ENCODE measurements at regions of chr17 and their contacts with region 1.

Region 1: DNA sequence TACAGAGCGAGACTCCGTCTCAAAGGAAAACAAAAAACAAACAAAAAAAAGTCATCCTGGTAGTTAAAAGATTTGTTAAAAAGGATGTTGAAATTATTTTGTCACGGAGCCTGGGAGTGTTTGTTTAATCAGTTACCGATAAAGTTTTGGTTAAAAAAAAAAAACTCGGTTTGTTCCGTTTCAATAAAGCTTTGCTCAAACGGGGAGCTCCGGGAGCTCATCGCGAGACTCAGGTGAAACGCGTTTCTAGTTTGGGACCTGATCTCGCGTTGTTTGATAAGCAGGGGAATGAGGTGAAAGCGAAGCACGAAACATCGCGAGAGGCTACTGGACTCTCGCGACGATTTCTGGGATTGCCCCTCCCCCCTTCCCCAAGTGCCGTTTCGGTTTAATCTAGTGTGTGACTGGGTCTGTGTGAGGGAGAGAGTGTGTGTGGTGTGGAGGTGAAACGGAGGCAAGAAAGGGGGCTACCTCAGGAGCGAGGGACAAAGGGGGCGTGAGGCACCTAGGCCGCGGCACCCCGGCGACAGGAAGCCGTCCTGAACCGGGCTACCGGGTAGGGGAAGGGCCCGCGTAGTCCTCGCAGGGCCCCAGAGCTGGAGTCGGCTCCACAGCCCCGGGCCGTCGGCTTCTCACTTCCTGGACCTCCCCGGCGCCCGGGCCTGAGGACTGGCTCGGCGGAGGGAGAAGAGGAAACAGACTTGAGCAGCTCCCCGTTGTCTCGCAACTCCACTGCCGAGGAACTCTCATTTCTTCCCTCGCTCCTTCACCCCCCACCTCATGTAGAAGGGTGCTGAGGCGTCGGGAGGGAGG is at the start of gene CDK12:
- DNase-seq: peak; percentile 98
- H3K4me3 ChIP-seq: peak within 1 kb of the TSS; percentile 98
- H3K27ac ChIP-seq: peak within 1 kb of the TSS; percentile 99
- H3K27me3 ChIP-seq: no peaks in the 10 kb centered on the region
- CTCF ChIP-seq: no peak
- polyA plus RNA-seq, gene CDK12: 21.7 and 24.3 TPM in 2 replicates

Region 2: DNA sequence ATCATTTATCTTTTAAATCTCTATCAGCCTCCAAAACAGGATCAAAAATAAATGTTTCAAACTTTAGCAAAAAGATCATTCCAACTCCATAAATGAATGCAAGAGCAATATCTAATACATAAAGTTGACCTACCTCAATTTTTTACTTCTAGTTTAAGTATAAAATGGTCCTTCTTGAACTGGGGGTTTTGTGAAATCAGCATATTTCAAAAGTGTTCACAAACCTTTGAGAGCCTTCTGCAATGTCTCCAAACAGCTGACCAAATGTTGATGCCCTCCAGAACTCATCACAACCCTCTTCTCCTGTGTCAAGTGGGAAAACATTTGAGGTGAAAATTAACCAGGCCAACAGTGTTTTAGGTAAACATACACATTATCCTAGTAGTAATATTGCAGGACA is 18.0 kb before region 1 on chr17:
- CTCF ChIA-PET with region 1: no interaction called
- POLR2A ChIA-PET with region 1: interaction called, 10 read pairs
- DNase-seq: no peak
- H3K4me3 ChIP-seq: no peak overlapping the region
- H3K27ac ChIP-seq: no peak overlapping the region
- H3K27me3 ChIP-seq: no peaks in the 10 kb centered on the region
- CTCF ChIP-seq: no peak

Region 3: GRCh38 chr17:39450847-39451581 is 10.3 kb before region 1 on chr17 and contains the start of gene MED1:
- CTCF ChIA-PET with region 1: interaction called, 3 read pairs
- POLR2A ChIA-PET with region 1: interaction called, 45 read pairs
- DNase-seq: peak; percentile 96
- H3K4me3 ChIP-seq: peak within 1 kb of the TSS; percentile 94
- H3K27ac ChIP-seq: peak within 1 kb of the TSS; percentile 75
- H3K27me3 ChIP-seq: no peaks in the 10 kb centered on the region
- CTCF ChIP-seq: no peak
- polyA plus RNA-seq, gene MED1: 36.9 and 43.9 TPM in 2 replicates

Region 4: GRCh38 chr17:39485555-39485954 is 24.2 kb after region 1 on chr17:
- CTCF ChIA-PET with region 1: no interaction called
- POLR2A ChIA-PET with region 1: interaction called, 14 read pairs
- DNase-seq: peak; percentile 88
- H3K4me3 ChIP-seq: no peak overlapping the region
- H3K27ac ChIP-seq: peak overlapping the region; percentile 89
- H3K27me3 ChIP-seq: no peaks in the 10 kb centered on the region
- CTCF ChIP-seq: no peak

Region 5: DNA sequence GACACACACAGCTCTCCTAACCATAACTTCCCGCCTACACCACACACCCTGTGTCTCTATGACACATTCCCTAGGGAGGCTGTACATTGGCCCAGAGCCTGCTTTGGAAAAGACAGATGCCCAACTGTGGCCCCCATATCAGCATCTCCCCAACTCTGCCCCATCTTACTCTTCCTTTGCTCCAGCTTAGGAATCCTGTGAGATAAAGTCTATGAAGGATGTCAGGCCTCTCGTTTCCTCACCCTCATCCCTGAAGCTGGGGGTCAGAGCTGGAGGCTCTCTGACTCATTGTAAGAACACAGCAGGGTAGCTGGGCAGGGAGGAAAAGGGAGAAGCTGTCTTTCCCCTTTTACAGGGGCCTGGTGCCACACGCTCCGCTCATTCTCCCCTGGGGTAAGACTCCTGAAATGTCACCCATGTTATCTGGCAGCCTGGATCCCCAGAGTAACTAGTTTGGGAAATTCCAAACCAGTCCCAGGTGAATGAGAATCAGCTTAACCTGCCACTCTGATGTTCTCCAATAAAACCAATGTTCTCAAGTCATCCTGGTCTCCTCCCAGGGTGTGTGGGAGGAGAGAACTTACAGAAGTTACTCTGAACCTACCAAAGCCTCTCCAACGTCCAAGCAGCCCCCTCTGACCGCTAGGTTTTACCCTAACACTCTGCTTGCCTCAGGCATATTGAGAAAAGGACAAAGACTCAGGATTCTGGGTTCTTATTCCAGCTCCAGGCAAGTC is 718.8 kb after region 1 on chr17:
- CTCF ChIA-PET with region 1: no interaction called
- POLR2A ChIA-PET with region 1: interaction called, 10 read pairs
- DNase-seq: no peak
- H3K4me3 ChIP-seq: no peak overlapping the region
- H3K27ac ChIP-seq: no peak overlapping the region
- H3K27me3 ChIP-seq: no peaks in the 10 kb centered on the region
- CTCF ChIP-seq: no peak